ENCODE measurements at regions of chr17 and their contacts with region 1.

Region 1: DNA sequence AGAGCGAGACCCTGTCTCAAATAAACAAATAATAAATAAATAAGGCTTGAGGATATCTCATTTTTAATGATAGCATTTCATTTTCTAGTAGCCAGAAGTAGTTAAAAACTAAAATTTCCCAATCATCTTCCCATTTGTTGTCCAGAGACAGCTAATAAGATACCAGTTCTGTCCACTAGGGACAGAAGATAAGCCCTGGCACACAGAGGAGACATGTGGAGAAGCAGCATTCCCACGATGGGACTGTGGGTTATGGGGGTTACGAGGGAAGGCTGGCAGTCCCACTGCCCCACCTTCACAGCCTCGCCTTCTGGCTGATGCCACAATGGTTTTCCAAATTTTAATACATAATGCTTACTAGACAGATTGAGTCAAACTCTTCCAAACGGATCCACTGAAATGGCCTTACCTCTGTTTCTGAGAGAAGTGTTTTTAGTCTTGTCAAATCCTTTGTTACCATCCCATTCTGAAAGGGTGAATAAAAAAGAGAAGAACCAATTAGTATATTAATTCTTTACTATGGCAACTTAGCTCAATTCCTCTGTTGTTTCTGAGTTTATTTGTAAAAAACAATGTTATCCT is 44.2 kb downstream of the HELZ start:
- DNase-seq: no peak
- H3K4me3 ChIP-seq: no peak overlapping the region
- H3K27ac ChIP-seq: no peak overlapping the region
- H3K4me1 ChIP-seq: no peaks in the 10 kb centered on the region
- H3K27me3 ChIP-seq: no peaks in the 10 kb centered on the region
- CTCF ChIP-seq: peak; percentile 52 to 61

Region 2: GRCh38 chr17:67258821-67259468 is 58.1 kb after region 1 on chr17:
- CTCF ChIA-PET with region 1: no interaction called
- dilution Hi-C with region 1: no loop called
- in situ Hi-C with region 1: no loop called
- intact Hi-C with region 1: no loop called
- DNase-seq: no peak
- H3K4me3 ChIP-seq: no peak overlapping the region
- H3K27ac ChIP-seq: no peak overlapping the region
- H3K4me1 ChIP-seq: peaks cover 13% of the 10 kb centered on the region
- H3K27me3 ChIP-seq: no peaks in the 10 kb centered on the region
- CTCF ChIP-seq: no peak

Region 3: DNA sequence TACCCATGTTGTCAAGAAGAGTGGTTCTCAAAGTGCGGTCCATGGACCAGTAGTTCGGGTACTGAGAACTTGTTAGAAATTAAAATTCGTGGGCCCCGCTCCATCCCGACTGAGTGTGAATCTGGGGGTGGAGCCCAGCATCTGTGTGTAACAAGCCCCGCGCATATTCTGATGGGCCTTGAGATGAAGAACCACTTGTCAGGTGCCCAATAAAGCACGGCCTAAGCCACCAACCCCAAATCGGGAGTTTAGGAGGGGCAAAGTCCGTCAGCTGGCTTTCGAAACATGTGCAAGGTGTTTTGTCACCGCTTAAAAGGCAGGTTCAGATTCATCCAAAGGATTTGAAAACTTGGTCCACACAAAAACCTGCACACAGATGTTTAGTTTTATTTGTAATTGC is 136.0 kb after region 1 on chr17:
- CTCF ChIA-PET with region 1: no interaction called
- dilution Hi-C with region 1: no loop called
- in situ Hi-C with region 1: no loop called
- intact Hi-C with region 1: loop called (anchors 5 kb)
- DNase-seq: no peak
- H3K4me3 ChIP-seq: no peak overlapping the region
- H3K27ac ChIP-seq: no peak overlapping the region
- H3K4me1 ChIP-seq: peaks cover 6% of the 10 kb centered on the region
- H3K27me3 ChIP-seq: no peaks in the 10 kb centered on the region
- CTCF ChIP-seq: no peak